Activated T-helper 2 cell treated with anti-CD3 and anti-CD28 coated beads, Interferon-gamma antibody, Interleukin-2, Interleukin-4, amounts not matched to agents 10 μg/mL and 5 μg/mL and 100 μg/mL, durations not matched to agents 14 hours and 24 hours and 36 hours (primary cell): ENCODE measurements at regions of chr2 and their contacts with region 1.

Region 1: GRCh38 chr2:64144057-64145013 is at the start of gene PELI1:
- DNase-seq: peak; percentile 89
- H3K4me3 Mint-ChIP-seq: peak within 1 kb of the TSS; percentile 89
- H3K27ac Mint-ChIP-seq: peak within 1 kb of the TSS; percentile 91
- H3K4me1 Mint-ChIP-seq: peaks cover 23% of the 10 kb centered on the region
- H3K27me3 Mint-ChIP-seq: no peaks in the 10 kb centered on the region
- total RNA-seq, gene PELI1: 21.6 and 25.1 TPM in 2 replicates

Region 2: DNA sequence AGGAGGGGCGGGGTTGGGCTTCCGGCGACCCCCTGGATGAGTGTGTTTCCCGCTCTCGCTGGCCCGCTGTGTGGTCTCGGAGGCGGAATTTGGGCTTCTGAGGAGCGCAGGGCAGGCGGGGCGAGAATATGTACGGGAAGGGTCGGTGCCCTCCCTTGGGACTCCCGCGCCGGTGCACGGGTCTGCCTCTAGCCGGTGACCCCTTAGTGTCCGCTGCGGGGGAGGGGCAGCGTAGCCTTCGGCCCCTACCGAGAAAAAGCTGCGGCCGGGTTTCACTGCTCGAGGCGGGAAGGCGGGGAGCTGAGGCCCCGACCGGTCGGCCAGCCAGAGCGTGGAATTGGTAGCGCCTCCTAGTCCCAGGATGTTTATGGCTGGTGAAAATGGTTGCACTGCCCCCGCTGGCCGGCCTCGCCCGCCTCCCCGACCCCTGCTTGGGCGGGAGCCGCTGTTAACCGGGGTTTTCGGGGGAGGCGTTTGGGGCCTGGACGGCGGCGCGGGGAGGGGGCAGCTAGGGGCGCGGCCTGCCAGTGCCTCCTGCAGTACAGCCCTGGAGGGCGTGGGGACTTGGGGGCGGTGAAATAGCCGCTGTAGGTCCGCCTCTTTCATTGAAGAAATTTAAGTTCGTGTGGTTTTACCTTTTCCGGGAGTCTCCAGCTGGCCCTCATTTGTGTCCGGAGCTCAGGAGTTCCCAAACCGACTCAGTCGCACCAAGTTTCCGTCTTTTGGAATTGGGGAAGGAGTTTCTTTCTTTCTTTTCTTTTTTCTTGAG is 302.9 kb before region 1 on chr2 and contains the start of gene UGP2:
- intact Hi-C with region 1: loop called (anchors 2 kb)
- DNase-seq: peak; percentile 88
- H3K4me3 Mint-ChIP-seq: peak within 1 kb of the TSS; percentile 92
- H3K27ac Mint-ChIP-seq: peak within 1 kb of the TSS; percentile 95
- H3K4me1 Mint-ChIP-seq: peaks cover 48% of the 10 kb centered on the region
- H3K27me3 Mint-ChIP-seq: peaks cover 2% of the 10 kb centered on the region
- total RNA-seq, gene UGP2: 90.8 and 91.2 TPM in 2 replicates

Region 3: DNA sequence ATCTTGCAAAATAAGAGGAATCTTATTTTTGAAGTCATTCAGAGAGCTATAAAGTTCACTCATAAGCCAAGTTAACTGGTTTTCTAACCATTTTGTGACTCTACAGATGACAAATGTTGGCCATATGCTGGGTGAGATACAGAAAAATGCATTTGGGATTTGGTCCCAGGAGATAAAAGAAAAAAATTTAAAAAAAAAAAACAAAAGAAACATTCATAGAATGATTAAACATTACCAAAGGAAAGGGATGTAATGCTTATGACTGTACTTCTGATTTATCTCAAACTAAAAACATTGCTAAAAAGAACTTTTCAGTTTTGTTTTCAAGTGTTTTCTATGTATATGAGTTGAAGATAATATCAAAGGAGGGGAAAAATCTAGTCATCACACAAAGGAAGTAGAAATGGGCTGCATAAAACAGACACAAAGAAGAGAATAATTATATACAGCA is 43.2 kb before region 1 on chr2:
- intact Hi-C with region 1: loop called (anchors 2 kb)
- DNase-seq: no peak
- H3K4me3 Mint-ChIP-seq: peak overlapping the region; percentile 27
- H3K27ac Mint-ChIP-seq: peak overlapping the region; percentile 89
- H3K4me1 Mint-ChIP-seq: peaks cover 44% of the 10 kb centered on the region
- H3K27me3 Mint-ChIP-seq: no peaks in the 10 kb centered on the region

Region 4: DNA sequence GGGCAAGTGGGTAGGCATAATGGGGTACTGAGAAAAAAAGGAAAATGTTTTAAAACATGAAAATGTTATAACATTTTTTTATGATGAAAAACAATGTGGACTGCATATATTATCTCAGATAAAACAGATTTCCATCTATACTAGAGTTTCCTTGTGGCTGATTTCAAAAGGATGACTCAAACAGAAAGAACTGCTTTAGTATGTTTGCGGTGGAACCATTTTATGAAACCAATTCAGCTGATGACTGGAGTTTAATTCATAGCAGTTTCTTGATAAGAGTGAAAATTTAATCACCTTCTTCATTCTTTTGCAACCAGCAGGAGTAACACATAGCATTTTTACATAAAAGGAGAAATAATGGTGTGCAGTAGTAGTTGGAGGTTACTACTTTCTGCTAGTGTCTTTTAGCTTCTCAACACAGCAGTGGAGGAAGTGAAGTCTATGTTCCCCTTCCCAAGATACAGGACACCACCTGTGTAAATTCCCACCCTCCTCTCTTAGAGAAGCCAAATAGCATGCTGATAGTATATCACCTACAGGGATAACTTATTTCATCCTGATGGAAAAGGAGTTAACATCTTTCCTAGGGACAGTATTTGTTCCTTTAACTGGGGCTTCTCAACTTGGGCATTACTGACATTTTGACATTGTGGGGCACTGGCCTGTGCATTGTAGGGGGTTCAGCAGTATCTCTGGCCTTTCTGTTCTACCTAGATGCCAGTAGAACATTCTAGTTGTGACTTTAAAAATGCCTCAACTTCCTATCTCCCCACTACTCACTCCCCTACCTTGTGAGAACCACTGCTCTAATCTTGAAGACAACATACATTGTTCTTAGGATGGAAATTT is 30.0 kb before region 1 on chr2:
- intact Hi-C with region 1: loop called (anchors 1 kb)
- DNase-seq: no peak
- H3K4me3 Mint-ChIP-seq: peak overlapping the region; percentile 6
- H3K27ac Mint-ChIP-seq: peak overlapping the region; percentile 74
- H3K4me1 Mint-ChIP-seq: peaks cover 55% of the 10 kb centered on the region
- H3K27me3 Mint-ChIP-seq: peaks cover 2% of the 10 kb centered on the region

Region 5: GRCh38 chr2:64133828-64134227 is 10.5 kb before region 1 on chr2:
- intact Hi-C with region 1: loop called (anchors 1 kb)
- DNase-seq: no peak
- H3K4me3 Mint-ChIP-seq: peak overlapping the region; percentile 26
- H3K27ac Mint-ChIP-seq: peak overlapping the region; percentile 68
- H3K4me1 Mint-ChIP-seq: peaks cover 69% of the 10 kb centered on the region
- H3K27me3 Mint-ChIP-seq: no peaks in the 10 kb centered on the region

Region 6: DNA sequence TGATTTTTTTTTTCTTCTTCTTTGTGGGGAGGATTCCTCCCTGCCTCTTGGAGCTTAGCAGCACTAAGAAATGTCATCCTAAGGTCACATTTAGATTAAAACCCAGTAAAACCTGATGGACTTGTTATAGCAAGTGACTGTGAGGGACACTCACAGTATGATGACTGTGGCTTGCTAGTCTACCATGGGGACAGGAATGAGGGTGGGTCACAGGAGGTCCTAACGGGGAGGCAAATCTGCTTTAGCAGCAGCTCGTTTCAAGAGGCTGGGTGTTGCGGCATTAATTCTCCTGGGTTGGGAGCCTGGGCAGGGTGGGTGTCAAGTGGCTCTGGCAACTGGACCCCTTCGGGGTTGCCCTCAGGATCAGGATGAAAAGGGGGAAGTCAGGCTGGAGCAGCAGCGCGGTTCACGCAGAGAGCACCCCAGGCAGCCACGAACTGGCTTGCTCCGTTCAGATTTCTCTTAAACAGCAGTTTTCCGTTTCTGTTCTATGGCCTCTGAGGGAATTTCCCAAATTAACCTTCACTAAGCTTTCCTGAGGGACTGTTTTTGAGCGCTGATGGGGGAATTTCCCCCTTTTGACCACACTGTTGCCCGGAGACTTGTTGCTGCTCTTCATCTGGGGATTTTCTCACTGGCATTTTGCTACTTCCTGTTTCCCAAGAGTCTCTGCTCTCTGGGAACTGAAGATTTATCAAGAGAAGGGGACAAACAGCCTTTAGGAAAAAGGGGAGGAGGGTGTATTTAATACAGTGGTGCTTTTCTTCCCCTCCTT is 59.7 kb after region 1 on chr2:
- intact Hi-C with region 1: loop called (anchors 2 kb)
- DNase-seq: no peak
- H3K4me3 Mint-ChIP-seq: peak overlapping the region; percentile 42
- H3K27ac Mint-ChIP-seq: peak overlapping the region; percentile 78
- H3K4me1 Mint-ChIP-seq: peaks cover 50% of the 10 kb centered on the region
- H3K27me3 Mint-ChIP-seq: no peaks in the 10 kb centered on the region

Region 7: GRCh38 chr2:64311948-64312621 is 167.8 kb after region 1 on chr2:
- intact Hi-C with region 1: no loop called
- DNase-seq: no peak
- H3K4me3 Mint-ChIP-seq: no peak overlapping the region
- H3K27ac Mint-ChIP-seq: no peak overlapping the region
- H3K4me1 Mint-ChIP-seq: no peaks in the 10 kb centered on the region
- H3K27me3 Mint-ChIP-seq: peaks cover 30% of the 10 kb centered on the region

Region 8: GRCh38 chr2:65227425-65228262 is 1083.3 kb after region 1 on chr2 and contains the start of gene ACTR2:
- intact Hi-C with region 1: loop called (anchors 5 kb)
- DNase-seq: peak; percentile 95
- H3K4me3 Mint-ChIP-seq: peak within 1 kb of the TSS; percentile 98
- H3K27ac Mint-ChIP-seq: peak within 1 kb of the TSS; percentile 96
- H3K4me1 Mint-ChIP-seq: peaks cover 27% of the 10 kb centered on the region
- H3K27me3 Mint-ChIP-seq: no peaks in the 10 kb centered on the region
- total RNA-seq, gene ACTR2: 339 and 350 TPM in 2 replicates